ENCODE measurements at regions of chr2 and their contacts with region 1.

Region 1: DNA sequence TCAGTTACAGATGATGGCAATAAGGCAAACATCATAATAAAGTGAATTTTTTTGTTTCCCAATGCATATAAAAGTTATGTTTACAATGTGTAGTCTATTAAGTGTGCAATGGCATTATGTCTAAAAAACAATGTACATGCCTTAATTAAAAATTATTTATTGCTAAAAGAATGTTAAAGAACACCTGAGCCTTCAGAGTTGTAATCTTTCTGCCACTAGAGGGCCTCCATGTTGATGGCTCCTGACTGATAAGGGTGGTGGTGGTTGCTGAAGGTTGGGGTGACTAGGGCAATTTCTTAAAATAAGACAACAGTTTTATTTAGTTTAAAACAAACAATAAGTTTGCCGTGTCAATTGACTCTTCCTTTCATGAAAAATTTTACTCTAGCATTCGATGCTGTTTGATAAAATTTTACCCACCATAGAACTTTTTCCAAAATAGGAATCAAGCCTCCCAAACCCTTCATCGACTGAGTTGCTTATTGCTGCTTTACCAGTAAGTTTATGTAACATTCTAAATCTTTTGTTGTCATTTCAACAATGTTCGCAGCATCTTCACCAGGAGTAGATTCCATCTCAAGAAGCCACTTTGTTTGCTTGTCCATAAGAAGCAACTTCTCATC is 32.3 kb downstream of the MAP3K2 start:
- DNase-seq: no peak

Region 2: DNA sequence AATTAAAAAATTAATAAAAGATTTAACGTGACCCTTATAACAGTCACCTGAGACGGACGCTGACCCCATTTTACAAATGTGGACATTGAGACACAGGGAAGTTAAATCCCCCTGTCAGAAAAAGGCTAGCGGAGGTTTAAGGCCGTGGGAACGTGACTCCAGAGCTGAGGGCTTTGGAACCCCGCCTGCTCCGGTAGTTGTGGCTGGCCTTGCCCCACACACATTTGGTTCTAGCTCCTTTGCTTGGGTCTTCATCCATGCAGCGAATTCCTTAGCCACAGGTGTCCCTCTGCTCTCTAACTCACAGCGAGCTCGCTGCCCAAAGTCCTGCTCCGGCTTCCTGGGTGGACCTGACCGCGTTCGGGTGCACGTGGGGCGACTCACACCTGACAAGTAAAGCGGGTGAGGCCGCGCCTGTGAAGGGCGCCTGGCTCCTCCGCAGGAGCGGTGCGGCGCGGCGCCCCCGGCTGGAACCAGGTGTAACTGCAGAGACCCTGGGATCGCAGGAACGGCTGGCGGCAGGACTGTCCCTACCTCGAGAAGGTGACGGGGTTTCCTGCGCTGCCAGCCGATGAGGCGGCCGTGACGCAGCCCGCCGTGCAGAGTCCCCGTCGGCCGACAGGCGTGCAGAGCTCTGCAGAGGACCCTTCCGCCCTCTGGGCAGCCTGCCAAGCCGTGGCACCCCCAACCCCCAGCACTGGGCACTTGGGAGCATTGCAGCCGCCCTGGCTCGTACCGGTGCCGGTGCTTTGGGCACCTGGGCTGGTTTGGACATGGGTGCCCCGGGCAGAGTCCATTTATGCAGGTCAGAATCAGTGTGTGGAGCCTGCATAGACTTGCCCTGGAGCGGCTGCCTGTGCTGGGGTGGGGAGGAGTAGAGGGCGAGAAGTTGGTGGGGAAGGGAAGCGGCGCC is 60.4 kb after region 1 on chr2:
- in situ Hi-C with region 1: loop called (anchors 10 kb)
- DNase-seq: peak; percentile 53

Region 3: GRCh38 chr2:127597984-127598380 is 242.5 kb after region 1 on chr2:
- in situ Hi-C with region 1: no loop called
- DNase-seq: no peak